ENCODE measurements at regions of chr15 and their contacts with region 1.

Region 1: GRCh38 chr15:37995461-37996347 is 61.3 kb downstream of the TMCO5A start:
- DNase-seq: no peak
- H3K4me3 ChIP-seq: no peak overlapping the region
- H3K27ac ChIP-seq: no peak overlapping the region
- H3K4me1 ChIP-seq: no peaks in the 10 kb centered on the region
- H3K27me3 ChIP-seq: no peaks in the 10 kb centered on the region
- CTCF ChIP-seq: peak; percentile 19 to 57 (median 43)
- POLR2A ChIP-seq: no peak

Region 2: GRCh38 chr15:37933666-37934065 is 62.0 kb before region 1 on chr15:
- intact Hi-C with region 1: no loop called
- DNase-seq: no peak
- H3K4me3 ChIP-seq: no peak overlapping the region
- H3K27ac ChIP-seq: no peak overlapping the region
- H3K4me1 ChIP-seq: no peaks in the 10 kb centered on the region
- H3K27me3 ChIP-seq: no peaks in the 10 kb centered on the region
- CTCF ChIP-seq: no peak
- POLR2A ChIP-seq: no peak

Region 3: GRCh38 chr15:38354315-38354929 is 358.7 kb after region 1 on chr15:
- intact Hi-C with region 1: loop called (anchors 10 kb)
- DNase-seq: no peak
- H3K4me3 ChIP-seq: no peak overlapping the region
- H3K27ac ChIP-seq: no peak overlapping the region
- H3K4me1 ChIP-seq: no peaks in the 10 kb centered on the region
- H3K27me3 ChIP-seq: no peaks in the 10 kb centered on the region
- CTCF ChIP-seq: peak; percentile 54 to 58 (median 57)
- POLR2A ChIP-seq: no peak

Region 4: DNA sequence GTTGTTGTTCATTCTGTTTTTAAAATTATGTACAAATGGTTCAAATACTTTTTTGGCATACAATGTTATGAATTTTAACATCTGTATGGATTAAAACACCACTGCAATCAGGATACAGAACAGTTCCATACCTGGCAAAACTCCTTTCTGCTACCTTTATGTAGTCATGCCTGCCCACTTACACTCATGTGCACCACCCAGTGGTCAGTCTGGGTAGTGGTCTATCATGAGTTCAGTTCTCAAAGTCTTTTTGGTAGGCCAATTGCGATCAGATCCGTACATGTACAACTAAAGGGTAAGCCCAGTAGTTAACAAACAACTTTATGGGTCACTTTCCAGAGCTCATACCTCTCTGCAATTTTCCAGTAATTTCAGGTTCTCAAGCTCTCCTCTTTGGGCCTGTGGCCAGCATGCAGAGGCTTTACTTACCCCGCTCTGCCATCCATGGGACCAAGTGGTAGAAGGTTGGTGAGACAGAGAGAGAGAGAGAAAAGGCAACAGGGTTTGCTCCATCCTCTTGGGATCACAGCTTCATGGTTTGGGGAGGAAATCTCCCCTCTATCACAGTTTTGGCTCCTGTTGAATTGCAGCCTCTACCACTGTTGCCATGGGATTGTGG is 394.3 kb after region 1 on chr15:
- intact Hi-C with region 1: loop called (anchors 10 kb)
- DNase-seq: no peak
- H3K4me3 ChIP-seq: no peak overlapping the region
- H3K27ac ChIP-seq: no peak overlapping the region
- H3K4me1 ChIP-seq: no peaks in the 10 kb centered on the region
- H3K27me3 ChIP-seq: no peaks in the 10 kb centered on the region
- CTCF ChIP-seq: peak; percentile 31 to 72 (median 50)
- POLR2A ChIP-seq: no peak

Measured in vagina (tissue), 2 donors.